ENCODE measurements at regions of chr11 and their contacts with region 1.

Region 1: GRCh38 chr11:12043959-12044819 is 35.8 kb upstream of the DKK3 start:
- DNase-seq: peak in 2 of 3 donors; percentile 75 to 85
- ATAC-seq: peak; percentile 87
- H3K4me3 ChIP-seq: no peak overlapping the region
- H3K4me1 ChIP-seq: no peaks in the 10 kb centered on the region
- CTCF ChIP-seq: peak; percentile 83

Region 2: GRCh38 chr11:11787305-11788062 is 256.7 kb before region 1 on chr11:
- intact Hi-C with region 1: no loop called
- DNase-seq: peak in 2 of 3 donors; percentile 76 to 83
- ATAC-seq: peak; percentile 91
- H3K4me3 ChIP-seq: no peak overlapping the region
- H3K4me1 ChIP-seq: no peaks in the 10 kb centered on the region
- CTCF ChIP-seq: peak; percentile 75

Region 3: GRCh38 chr11:11798586-11799438 is 245.4 kb before region 1 on chr11:
- intact Hi-C with region 1: loop called (anchors 5 kb)
- DNase-seq: peak; percentile 67 to 91 (median 91)
- ATAC-seq: peak; percentile 94
- H3K4me3 ChIP-seq: no peak overlapping the region
- H3K4me1 ChIP-seq: no peaks in the 10 kb centered on the region
- CTCF ChIP-seq: peak; percentile 71

Region 4: GRCh38 chr11:11931461-11932055 is 112.6 kb before region 1 on chr11:
- intact Hi-C with region 1: loop called in 1 of 2 experiments (anchors 10 kb)
- DNase-seq: peak in 1 of 3 donors; percentile 26
- ATAC-seq: peak; percentile 63
- H3K4me3 ChIP-seq: no peak overlapping the region
- H3K4me1 ChIP-seq: no peaks in the 10 kb centered on the region
- CTCF ChIP-seq: no peak

Region 5: GRCh38 chr11:12281571-12282478 is 237.6 kb after region 1 on chr11:
- intact Hi-C with region 1: loop called (anchors 2 kb)
- DNase-seq: peak; percentile 76 to 92 (median 87)
- ATAC-seq: peak; percentile 82
- H3K4me3 ChIP-seq: no peak overlapping the region
- H3K4me1 ChIP-seq: peaks cover 5% of the 10 kb centered on the region
- CTCF ChIP-seq: peak; percentile 91

Region 6: DNA sequence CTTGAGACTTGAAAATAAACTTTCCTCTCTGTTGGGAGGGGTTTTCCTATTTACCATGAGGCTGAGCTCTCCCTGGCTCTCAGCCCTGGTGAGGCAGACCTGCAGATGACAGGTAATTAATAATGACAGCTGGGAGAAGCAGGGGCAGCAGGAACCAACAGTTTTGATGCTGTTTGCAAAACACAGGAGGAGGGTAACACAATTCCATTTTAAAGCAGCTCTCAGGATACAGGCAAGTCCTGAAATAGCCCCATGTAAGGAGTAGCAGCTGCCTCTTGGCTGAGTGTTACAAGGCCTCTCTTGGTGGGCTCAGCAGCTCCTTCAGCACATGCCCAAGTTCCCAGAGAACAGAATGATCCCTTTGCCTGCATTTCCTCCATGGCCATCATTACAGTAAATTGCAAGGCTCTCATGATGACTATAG is 346.5 kb after region 1 on chr11:
- intact Hi-C with region 1: no loop called
- DNase-seq: no peak
- ATAC-seq: peak; percentile 21
- H3K4me3 ChIP-seq: no peak overlapping the region
- H3K4me1 ChIP-seq: no peaks in the 10 kb centered on the region
- CTCF ChIP-seq: no peak

Measured in mucosa of descending colon (tissue), 3 donors.